ENCODE measurements at regions of chr12 and their contacts with region 1.

Region 1: GRCh38 chr12:1740161-1740948 is 49.5 kb downstream of the ADIPOR2 start:
- DNase-seq: no peak
- H3K4me3 ChIP-seq: no peak overlapping the region
- H3K4me3 Mint-ChIP-seq: peak overlapping the region; percentile 7
- H3K27ac Mint-ChIP-seq: peak overlapping the region; percentile 71
- H3K4me1 ChIP-seq: peaks cover 56% of the 10 kb centered on the region
- H3K4me1 Mint-ChIP-seq: peaks cover 44% of the 10 kb centered on the region
- H3K27me3 ChIP-seq: no peaks in the 10 kb centered on the region
- H3K27me3 Mint-ChIP-seq: no peaks in the 10 kb centered on the region
- CTCF ChIP-seq: no peak

Region 2: GRCh38 chr12:1698638-1699214 is 41.6 kb before region 1 on chr12:
- CTCF ChIA-PET with region 1: no interaction called
- POLR2A ChIA-PET with region 1: interaction called, 4 read pairs
- intact Hi-C with region 1: loop called (anchors 2 kb)
- DNase-seq: peak; percentile 69 to 74
- H3K4me3 ChIP-seq: no peak overlapping the region
- H3K4me3 Mint-ChIP-seq: no peak overlapping the region
- H3K27ac Mint-ChIP-seq: peak overlapping the region; percentile 26
- H3K4me1 ChIP-seq: peaks cover 45% of the 10 kb centered on the region
- H3K4me1 Mint-ChIP-seq: peaks cover 25% of the 10 kb centered on the region
- H3K27me3 ChIP-seq: no peaks in the 10 kb centered on the region
- H3K27me3 Mint-ChIP-seq: no peaks in the 10 kb centered on the region
- CTCF ChIP-seq: peak in 1 of 2 experiments; percentile 46

Region 3: GRCh38 chr12:1716215-1716862 is 24.0 kb before region 1 on chr12:
- CTCF ChIA-PET with region 1: no interaction called
- POLR2A ChIA-PET with region 1: no interaction called
- intact Hi-C with region 1: loop called (anchors 1 kb)
- DNase-seq: no peak
- H3K4me3 ChIP-seq: no peak overlapping the region
- H3K4me3 Mint-ChIP-seq: no peak overlapping the region
- H3K27ac Mint-ChIP-seq: no peak overlapping the region
- H3K4me1 ChIP-seq: peaks cover 6% of the 10 kb centered on the region
- H3K4me1 Mint-ChIP-seq: peaks cover 14% of the 10 kb centered on the region
- H3K27me3 ChIP-seq: no peaks in the 10 kb centered on the region
- H3K27me3 Mint-ChIP-seq: no peaks in the 10 kb centered on the region
- CTCF ChIP-seq: no peak

Region 4: GRCh38 chr12:1766115-1766514 is 25.8 kb after region 1 on chr12:
- CTCF ChIA-PET with region 1: no interaction called
- POLR2A ChIA-PET with region 1: no interaction called
- intact Hi-C with region 1: loop called (anchors 1 kb)
- DNase-seq: peak in 1 of 2 experiments; percentile 60
- H3K4me3 ChIP-seq: no peak overlapping the region
- H3K4me3 Mint-ChIP-seq: peak overlapping the region; percentile 11
- H3K27ac Mint-ChIP-seq: peak overlapping the region; percentile 58
- H3K4me1 ChIP-seq: peaks cover 59% of the 10 kb centered on the region
- H3K4me1 Mint-ChIP-seq: peaks cover 56% of the 10 kb centered on the region
- H3K27me3 ChIP-seq: no peaks in the 10 kb centered on the region
- H3K27me3 Mint-ChIP-seq: no peaks in the 10 kb centered on the region
- CTCF ChIP-seq: no peak

Measured in Caco-2 (cell line).